ENCODE measurements at regions of chr13 and their contacts with region 1.

Region 1: DNA sequence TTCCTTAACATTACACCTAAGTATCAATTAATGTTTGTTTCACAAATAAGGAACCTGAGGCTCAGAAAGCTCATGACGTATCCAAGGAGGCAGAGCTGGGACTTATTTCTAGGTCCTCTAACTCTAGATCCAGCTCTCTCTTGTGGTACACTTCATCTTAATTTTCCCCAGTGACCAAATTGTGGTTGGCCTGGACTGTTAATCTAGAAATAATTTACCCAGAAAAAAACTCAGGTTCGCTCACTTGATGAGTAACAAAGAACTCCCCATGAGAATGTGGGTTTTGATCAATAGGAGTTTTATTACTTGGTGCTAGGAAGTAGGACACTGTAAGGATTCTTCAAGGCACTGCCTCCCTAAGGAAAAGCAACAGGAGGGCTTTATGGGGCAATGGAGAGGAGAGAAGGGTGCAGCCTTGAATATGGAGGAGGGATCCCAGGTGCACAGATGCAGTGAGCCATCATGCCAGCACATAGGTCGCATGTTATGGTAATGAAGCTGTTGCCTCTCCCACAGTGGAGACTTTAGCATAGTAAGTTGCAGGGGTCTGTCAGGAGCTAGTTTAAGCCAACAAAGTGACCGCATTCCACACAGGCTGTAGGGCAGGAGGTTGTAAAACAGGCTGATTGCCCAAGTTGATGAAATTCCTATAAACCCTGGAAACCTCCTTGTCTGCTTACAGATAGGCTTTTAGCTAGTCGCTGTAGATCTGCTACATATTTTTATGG is 14.7 kb downstream of the RAP2A start:
- DNase-seq: no peak
- CTCF ChIP-seq: no peak

Region 2: GRCh38 chr13:97423300-97424045 is 25.2 kb before region 1 on chr13:
- CTCF ChIA-PET with region 1: no interaction called
- POLR2A ChIA-PET with region 1: no interaction called
- DNase-seq: no peak
- CTCF ChIP-seq: no peak

Region 3: GRCh38 chr13:97460004-97460775 is 11.5 kb after region 1 on chr13:
- CTCF ChIA-PET with region 1: interaction called, 11 read pairs
- POLR2A ChIA-PET with region 1: interaction called, 4 read pairs
- DNase-seq: peak; percentile 55
- CTCF ChIP-seq: no peak